Naive thymus-derived CD4-positive, alpha-beta T cell (primary cell): ENCODE measurements at regions of chr4 and their contacts with region 1.

Region 1: DNA sequence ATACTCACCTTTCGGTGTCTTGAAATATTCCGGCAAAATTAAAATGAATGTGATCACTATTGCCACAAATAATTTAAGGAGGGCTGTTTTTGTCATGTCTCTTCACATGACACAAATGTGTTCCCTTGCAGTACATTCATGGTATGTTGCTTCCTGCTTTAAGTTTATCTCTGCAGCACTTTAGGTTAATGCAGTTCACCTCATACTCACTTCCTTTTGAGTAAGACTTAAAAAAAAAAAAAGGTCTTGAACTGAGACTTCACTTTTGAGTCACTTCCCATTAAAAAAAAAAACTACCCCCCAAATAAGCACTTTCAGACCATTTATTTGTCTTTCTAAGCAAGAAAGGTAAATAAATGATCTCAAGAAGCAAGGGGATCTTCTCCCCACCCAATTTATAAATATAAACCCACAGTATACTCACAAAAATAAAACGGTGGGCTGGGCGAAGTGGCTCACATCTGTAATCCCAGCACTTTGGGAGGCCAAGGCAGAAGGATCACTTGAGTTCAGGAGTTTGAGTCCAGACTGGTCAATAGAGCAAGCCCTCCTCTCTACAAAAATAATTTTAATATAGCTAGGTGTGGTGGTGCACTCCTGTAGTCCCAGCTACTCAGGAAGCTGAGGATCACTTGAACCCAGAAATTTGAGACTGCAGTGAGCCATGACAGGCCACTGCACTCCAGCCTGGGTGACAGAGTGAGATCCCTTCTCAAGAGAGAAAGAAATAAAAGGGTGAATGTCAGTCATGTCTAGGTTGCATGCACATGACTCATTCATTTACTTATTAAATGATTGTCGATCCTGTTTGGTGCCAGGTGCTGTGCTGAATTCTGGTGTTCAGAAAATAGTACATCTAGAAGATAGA is at the start of gene TMEM156:
- DNase-seq: peak in 7 of 9 donors; percentile 59 to 77 (median 70)
- ATAC-seq: peak; percentile 93
- H3K4me3 ChIP-seq: peak within 1 kb of the TSS; percentile 61
- H3K4me3 Mint-ChIP-seq: peak within 1 kb of the TSS; percentile 65 to 89 (median 82)
- H3K27ac ChIP-seq: peak within 1 kb of the TSS; percentile 55
- H3K27ac Mint-ChIP-seq: peak within 1 kb of the TSS; percentile 19 to 93 (median 87)
- H3K4me1 ChIP-seq: peaks cover 29 to 45% of the 10 kb centered on the region in 2 donors
- H3K4me1 Mint-ChIP-seq: peaks cover 16 to 55% (median 44%) of the 10 kb centered on the region in 7 donors
- H3K27me3 ChIP-seq: no peaks in the 10 kb centered on the region
- H3K27me3 Mint-ChIP-seq: no peaks in the 10 kb centered on the region
- total RNA-seq, gene TMEM156: 8.6 to 36.4 (median 9.4) TPM

Region 2: DNA sequence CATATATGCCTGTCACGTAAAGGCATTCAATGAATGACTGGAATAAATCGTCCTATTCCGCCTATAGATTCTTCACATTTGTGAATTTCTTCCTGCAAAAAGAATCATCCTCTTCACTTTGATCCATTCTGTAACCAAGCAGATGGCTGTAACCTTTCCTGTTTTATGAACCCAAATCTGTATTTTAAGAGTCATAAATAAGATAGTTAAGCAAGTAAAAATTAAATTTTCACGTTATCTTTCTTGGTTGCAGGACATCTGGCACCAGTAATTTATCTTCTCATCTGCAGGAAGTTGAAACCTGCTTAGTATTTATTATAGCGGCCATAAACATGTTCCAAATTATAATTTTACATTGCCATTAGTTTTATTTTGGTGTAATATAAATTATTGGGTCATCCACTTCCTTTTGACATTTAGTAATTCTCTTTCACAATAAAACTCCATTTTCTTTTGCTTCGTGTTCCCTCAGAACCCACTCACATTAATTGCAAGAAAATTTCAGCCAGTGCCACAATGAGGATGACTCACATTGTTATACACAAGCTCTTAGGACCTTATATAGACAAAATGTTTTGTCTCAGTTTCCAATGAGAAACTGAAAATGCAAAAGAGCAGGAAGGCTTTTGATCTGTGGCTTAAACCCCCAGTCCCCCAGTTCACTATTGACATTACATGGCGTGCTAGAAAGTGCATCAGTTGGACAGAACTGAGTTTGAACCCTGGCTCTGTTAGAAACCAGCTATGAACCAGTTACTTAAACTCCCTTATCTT is 51.4 kb before region 1 on chr4:
- CTCF ChIA-PET with region 1: no interaction called
- POLR2A ChIA-PET with region 1: interaction called, 4 read pairs
- intact Hi-C with region 1: loop called (anchors 1 to 5 kb)
- DNase-seq: no peak
- ATAC-seq: no peak
- H3K4me3 ChIP-seq: no peak overlapping the region
- H3K4me3 Mint-ChIP-seq: peak overlapping the region in 1 of 10 donors; percentile 50
- H3K27ac ChIP-seq: no peak overlapping the region
- H3K27ac Mint-ChIP-seq: peak overlapping the region in 2 of 9 donors; percentile 28 to 65
- H3K4me1 ChIP-seq: no peaks in the 10 kb centered on the region
- H3K4me1 Mint-ChIP-seq: peaks cover 2 to 55% (median 5%) of the 10 kb centered on the region in 7 donors
- H3K27me3 ChIP-seq: no peaks in the 10 kb centered on the region
- H3K27me3 Mint-ChIP-seq: no peaks in the 10 kb centered on the region

Region 3: DNA sequence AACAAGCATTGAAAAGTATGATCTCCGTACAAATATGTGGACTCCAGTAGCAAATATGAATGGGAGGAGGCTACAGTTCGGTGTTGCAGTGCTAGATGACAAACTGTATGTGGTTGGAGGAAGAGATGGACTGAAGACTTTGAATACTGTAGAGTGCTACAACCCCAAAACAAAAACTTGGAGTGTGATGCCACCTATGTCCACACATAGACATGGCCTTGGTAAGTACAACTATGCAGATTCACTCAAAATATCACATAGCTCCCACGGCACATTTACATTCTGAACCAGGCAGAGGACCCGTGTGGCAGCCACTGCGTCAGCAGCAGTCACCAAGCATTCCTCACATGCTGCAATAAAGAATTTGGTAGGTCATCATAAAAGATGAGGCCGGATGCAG is 70.8 kb after region 1 on chr4:
- CTCF ChIA-PET with region 1: no interaction called
- POLR2A ChIA-PET with region 1: no interaction called
- intact Hi-C with region 1: no loop called
- DNase-seq: no peak
- ATAC-seq: no peak
- H3K4me3 ChIP-seq: no peak overlapping the region
- H3K4me3 Mint-ChIP-seq: no peak overlapping the region
- H3K27ac ChIP-seq: no peak overlapping the region
- H3K27ac Mint-ChIP-seq: no peak overlapping the region
- H3K4me1 ChIP-seq: no peaks in the 10 kb centered on the region
- H3K4me1 Mint-ChIP-seq: peaks cover 0 to 4% (median 0%) of the 10 kb centered on the region in 7 donors
- H3K27me3 ChIP-seq: no peaks in the 10 kb centered on the region
- H3K27me3 Mint-ChIP-seq: no peaks in the 10 kb centered on the region

Region 4: GRCh38 chr4:39638354-39639240 is 606.1 kb after region 1 on chr4 and contains the start of gene SMIM14:
- CTCF ChIA-PET with region 1: no interaction called
- POLR2A ChIA-PET with region 1: no interaction called
- intact Hi-C with region 1: loop called in 1 of 2 experiments (anchors 5 kb)
- DNase-seq: peak; percentile 69 to 96 (median 82)
- ATAC-seq: peak; percentile 92
- H3K4me3 ChIP-seq: peak within 1 kb of the TSS; percentile 77
- H3K4me3 Mint-ChIP-seq: peak within 1 kb of the TSS; percentile 86 to 97 (median 94)
- H3K27ac ChIP-seq: peak within 1 kb of the TSS; percentile 79
- H3K27ac Mint-ChIP-seq: peak within 1 kb of the TSS; percentile 67 to 96 (median 86)
- H3K4me1 ChIP-seq: peaks cover 12 to 13% of the 10 kb centered on the region in 2 donors
- H3K4me1 Mint-ChIP-seq: peaks cover 22 to 51% (median 44%) of the 10 kb centered on the region in 7 donors
- H3K27me3 ChIP-seq: no peaks in the 10 kb centered on the region
- H3K27me3 Mint-ChIP-seq: peaks cover 0 to 27% (median 0%) of the 10 kb centered on the region in 5 donors
- total RNA-seq, gene SMIM14: 4.6 to 15.1 (median 12.9) TPM

Region 5: GRCh38 chr4:40525811-40526598 is 1493.6 kb after region 1 on chr4:
- CTCF ChIA-PET with region 1: no interaction called
- POLR2A ChIA-PET with region 1: no interaction called
- intact Hi-C with region 1: no loop called
- DNase-seq: no peak
- ATAC-seq: no peak
- H3K4me3 ChIP-seq: no peak overlapping the region
- H3K4me3 Mint-ChIP-seq: no peak overlapping the region
- H3K27ac ChIP-seq: no peak overlapping the region
- H3K27ac Mint-ChIP-seq: no peak overlapping the region
- H3K4me1 ChIP-seq: no peaks in the 10 kb centered on the region
- H3K4me1 Mint-ChIP-seq: peaks cover 0 to 3% (median 1%) of the 10 kb centered on the region in 7 donors
- H3K27me3 ChIP-seq: no peaks in the 10 kb centered on the region
- H3K27me3 Mint-ChIP-seq: no peaks in the 10 kb centered on the region